H1 (cell line): ENCODE measurements at regions of chr20 and their contacts with region 1.

Region 1: DNA sequence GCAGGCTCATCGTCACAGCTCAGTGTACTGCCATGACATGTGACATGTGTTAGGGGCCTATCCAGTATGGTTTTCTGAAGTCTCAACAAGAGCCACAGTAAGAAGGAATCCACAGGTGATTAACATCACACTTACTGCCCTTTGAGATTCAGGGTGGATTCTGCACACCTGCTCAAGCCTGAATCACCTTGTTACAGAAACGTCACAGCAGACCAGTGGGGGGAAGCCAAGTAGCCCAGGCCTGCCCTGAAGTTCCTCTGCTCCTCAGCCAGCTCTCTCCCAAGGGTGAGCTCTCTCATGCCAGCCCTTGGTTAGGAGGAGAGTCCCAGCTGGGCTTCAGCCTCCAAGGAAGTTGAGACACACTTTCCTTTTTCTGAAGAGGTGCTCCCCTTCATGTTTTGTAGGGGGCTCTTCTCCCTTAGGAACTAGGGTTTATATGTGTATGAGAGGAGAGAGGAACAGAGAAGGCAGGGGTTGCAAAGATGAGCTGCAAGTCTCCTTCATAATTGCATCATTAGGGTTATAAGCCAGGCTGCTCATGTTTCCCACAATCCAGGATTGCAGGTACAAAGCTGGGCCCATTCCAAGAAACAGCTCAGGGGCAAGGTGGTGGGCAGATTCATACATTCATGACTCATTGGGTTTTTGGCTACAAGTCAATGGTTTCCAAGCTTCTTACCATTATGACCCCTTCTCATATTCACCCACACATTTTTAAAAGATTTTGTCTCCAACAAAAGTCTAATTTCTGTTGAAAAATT is 11.6 kb downstream of the GSS start:
- DNase-seq: no peak
- H3K4me3 ChIP-seq: no peak overlapping the region
- H3K27ac ChIP-seq: no peak overlapping the region
- H3K4me1 ChIP-seq: no peaks in the 10 kb centered on the region
- H3K27me3 ChIP-seq: no peaks in the 10 kb centered on the region
- CTCF ChIP-seq: no peak
- EP300 ChIP-seq: no peak
- POLR2A ChIP-seq: no peak
- RAD21 ChIP-seq: no peak

Region 2: GRCh38 chr20:34955232-34956040 is 11.4 kb after region 1 on chr20 and contains the starts of genes GSS and MYH7B:
- CTCF ChIA-PET with region 1: interaction called, 7 read pairs
- POLR2A ChIA-PET with region 1: interaction called, 16 read pairs
- DNase-seq: peak; percentile 96 to 100
- H3K4me3 ChIP-seq: peak within 1 kb of the TSS; percentile 64 to 91 (median 74)
- H3K27ac ChIP-seq: peak within 1 kb of the TSS; percentile 35; the same call in 1 of the 2 replicates
- H3K4me1 ChIP-seq: peaks cover 0 to 12% (median under 1%) of the 10 kb centered on the region in 4 experiments; a peak in 3 of 7 replicates
- H3K27me3 ChIP-seq: peaks cover 0 to 5% (median 1%) of the 10 kb centered on the region in 4 experiments; a peak in 3 of 7 replicates
- CTCF ChIP-seq: peak; percentile 46 to 59 (median 55); a peak in 3 of 4 replicates
- EP300 ChIP-seq: 0 out of 3 replicates have a peak, but pooled peaks of 1 of the 2 experiments have one; percentile 5
- POLR2A ChIP-seq: peak; percentile 56 to 70; a peak in 2 of 3 replicates
- RAD21 ChIP-seq: peak; percentile 60 to 63
- total RNA-seq, gene GSS: 29.4 and 34.6 TPM in 2 replicates
- total RNA-seq, gene MYH7B: 0.30 and 0.69 TPM in 2 replicates